ENCODE measurements at regions of chr5 and their contacts with region 1.

Region 1: GRCh38 chr5:138459311-138459933 is 5.9 kb upstream of the EGR1 start:
- DNase-seq: peak in 4 of 7 donors; percentile 39 to 57 (median 46)
- H3K4me3 ChIP-seq: no peak overlapping the region
- H3K27ac ChIP-seq: no peak overlapping the region
- H3K4me1 ChIP-seq: peaks cover 0 to 17% of the 10 kb centered on the region in 2 donors
- H3K27me3 ChIP-seq: no peaks in the 10 kb centered on the region
- CTCF ChIP-seq: no peak
- POLR2A ChIP-seq: no peak

Region 2: DNA sequence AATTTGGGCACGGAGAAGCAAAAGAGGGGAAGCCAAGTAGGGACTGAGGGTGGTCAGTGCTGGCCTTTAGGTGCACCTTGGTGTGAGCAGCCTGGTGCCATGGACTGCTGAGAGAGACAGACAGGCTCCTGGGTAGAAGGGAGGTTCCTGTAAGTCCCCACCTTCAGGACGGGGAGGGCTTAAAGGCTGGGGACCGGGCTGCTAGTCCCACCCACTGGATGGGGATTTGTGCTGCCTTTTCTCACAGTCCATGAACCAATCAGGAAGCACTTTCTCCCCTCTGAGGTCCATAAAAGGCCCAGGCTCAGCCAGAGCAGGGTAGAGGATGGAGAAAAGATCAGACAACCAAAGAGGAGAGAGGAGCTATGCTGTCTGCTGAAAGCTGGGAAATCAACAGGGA is 143.1 kb before region 1 on chr5:
- intact Hi-C with region 1: no loop called
- DNase-seq: no peak
- H3K4me3 ChIP-seq: no peak overlapping the region
- H3K27ac ChIP-seq: no peak overlapping the region
- H3K4me1 ChIP-seq: no peaks in the 10 kb centered on the region
- H3K27me3 ChIP-seq: no peaks in the 10 kb centered on the region
- CTCF ChIP-seq: no peak
- POLR2A ChIP-seq: no peak

Region 3: DNA sequence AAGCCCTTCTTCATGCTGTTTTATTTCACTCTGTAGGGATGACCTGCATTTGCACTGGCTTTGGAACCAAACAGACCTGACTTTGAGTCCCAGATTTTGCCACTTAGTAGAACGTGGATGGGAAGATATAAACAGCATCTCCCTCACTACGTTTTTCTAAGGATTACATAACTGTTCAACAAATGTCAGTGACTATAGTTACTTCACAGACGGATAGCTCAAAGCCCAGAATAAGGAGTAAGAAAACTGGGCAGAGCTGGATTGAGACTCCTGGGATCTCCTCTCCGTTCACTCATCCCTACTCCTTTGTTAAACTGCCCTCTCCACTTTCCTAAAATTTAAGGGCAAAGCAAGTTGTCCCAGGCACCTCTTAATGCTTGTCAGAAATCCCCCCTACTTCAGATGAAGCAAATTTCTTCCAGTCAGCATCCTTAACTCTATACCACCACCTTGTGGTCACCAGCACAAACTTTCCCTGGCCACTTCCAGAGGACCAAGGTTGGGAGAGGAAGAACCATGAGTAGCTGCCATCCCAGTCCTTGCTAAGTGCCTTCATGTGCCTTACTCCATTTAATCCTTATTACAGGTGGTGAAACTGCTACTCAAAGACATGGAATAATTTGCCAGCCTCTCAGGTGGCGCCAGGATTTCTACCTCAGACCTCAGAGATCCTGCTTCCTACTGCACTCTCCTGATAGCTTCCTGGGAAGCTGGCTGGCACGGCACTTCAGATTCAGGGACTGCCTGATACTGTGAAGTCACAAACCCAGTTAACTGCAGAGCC is 44.3 kb after region 1 on chr5:
- intact Hi-C with region 1: loop called (anchors 2 to 5 kb)
- DNase-seq: peak; percentile 40 to 73 (median 51)
- H3K4me3 ChIP-seq: no peak overlapping the region
- H3K27ac ChIP-seq: peak overlapping the region in 1 of 5 donors; percentile 45
- H3K4me1 ChIP-seq: peaks cover 9 to 34% of the 10 kb centered on the region in 2 donors
- H3K27me3 ChIP-seq: no peaks in the 10 kb centered on the region
- CTCF ChIP-seq: peak; percentile 50 to 92 (median 84)
- POLR2A ChIP-seq: no peak